Transverse colon (tissue), 4 donors: ENCODE measurements at regions of chr5 and their contacts with region 1.

Region 1: DNA sequence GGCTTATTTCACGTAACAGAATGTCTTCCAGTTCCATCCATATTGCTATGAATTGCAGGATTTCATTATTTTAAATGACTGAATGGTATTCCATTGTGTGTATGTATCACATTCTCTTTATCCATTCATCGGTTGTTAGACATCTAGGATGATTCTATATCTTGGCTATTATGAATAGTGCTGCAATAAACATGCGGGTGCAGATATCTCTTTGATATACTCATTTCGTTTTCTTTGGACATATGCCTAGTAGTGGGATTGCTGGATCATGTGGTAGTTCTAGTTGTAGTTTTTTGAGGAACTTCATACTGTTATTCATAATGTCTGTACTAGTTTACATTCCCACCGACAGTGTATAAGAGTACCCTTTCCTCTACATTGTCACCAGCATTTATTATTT is 460.5 kb downstream of the MAN2A1 start:
- DNase-seq: no peak
- H3K4me3 ChIP-seq: no peak overlapping the region
- H3K27ac ChIP-seq: no peak overlapping the region
- H3K4me1 ChIP-seq: no peaks in the 10 kb centered on the region
- H3K27me3 ChIP-seq: no peaks in the 10 kb centered on the region
- CTCF ChIP-seq: no peak
- EP300 ChIP-seq: no peak
- POLR2A ChIP-seq: no peak

Region 2: DNA sequence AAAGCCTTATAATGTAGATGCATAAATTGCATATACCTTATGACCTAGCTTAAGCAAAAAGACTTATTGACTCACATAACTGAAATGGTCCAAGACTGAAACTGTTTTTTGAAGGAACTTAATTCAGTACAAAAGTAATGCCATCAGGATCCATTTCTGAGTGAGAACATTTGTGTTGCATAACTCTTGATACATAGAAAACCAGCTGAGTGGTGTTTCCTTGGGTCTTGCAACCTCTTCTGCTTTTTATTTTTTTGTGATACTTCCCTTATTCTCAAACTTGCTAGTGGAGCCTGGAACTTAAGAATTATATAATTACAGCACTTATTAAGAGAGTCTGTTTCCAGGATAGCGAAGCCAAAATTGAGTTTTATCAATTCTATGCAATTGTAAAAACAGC is 188.4 kb before region 1 on chr5:
- in situ Hi-C with region 1: no loop called
- intact Hi-C with region 1: no loop called
- DNase-seq: no peak
- H3K4me3 ChIP-seq: no peak overlapping the region
- H3K27ac ChIP-seq: no peak overlapping the region
- H3K4me1 ChIP-seq: no peaks in the 10 kb centered on the region
- H3K27me3 ChIP-seq: no peaks in the 10 kb centered on the region
- CTCF ChIP-seq: no peak
- EP300 ChIP-seq: no peak
- POLR2A ChIP-seq: no peak

Region 3: GRCh38 chr5:110094548-110094947 is 55.7 kb before region 1 on chr5:
- in situ Hi-C with region 1: no loop called
- intact Hi-C with region 1: loop called (anchors 2 kb)
- DNase-seq: no peak
- H3K4me3 ChIP-seq: no peak overlapping the region
- H3K27ac ChIP-seq: no peak overlapping the region
- H3K4me1 ChIP-seq: peaks cover 0 to 4% (median 0%) of the 10 kb centered on the region in 4 donors
- H3K27me3 ChIP-seq: no peaks in the 10 kb centered on the region
- CTCF ChIP-seq: no peak
- EP300 ChIP-seq: no peak
- POLR2A ChIP-seq: no peak

Region 4: DNA sequence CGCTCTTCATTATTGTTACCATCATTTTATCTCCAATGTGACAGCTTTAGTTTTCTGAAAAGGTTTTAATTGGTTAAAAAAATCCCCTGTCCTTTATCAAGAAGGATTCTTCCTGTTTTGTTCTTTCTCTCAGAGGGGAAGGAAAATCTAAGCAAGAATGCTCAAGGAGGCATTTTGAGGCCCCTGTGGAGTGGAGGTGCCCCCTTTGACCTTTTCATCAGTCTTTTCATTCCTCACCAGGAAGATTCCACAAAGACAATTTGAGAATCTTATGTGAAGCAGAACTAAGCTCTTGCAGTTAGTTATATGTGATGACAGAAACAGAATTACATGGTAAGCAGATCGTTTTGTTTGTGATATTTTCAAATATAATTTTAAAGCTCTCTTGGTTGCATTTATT is 29.1 kb after region 1 on chr5:
- in situ Hi-C with region 1: no loop called
- intact Hi-C with region 1: loop called (anchors 1 kb)
- DNase-seq: no peak
- H3K4me3 ChIP-seq: no peak overlapping the region
- H3K27ac ChIP-seq: no peak overlapping the region
- H3K4me1 ChIP-seq: no peaks in the 10 kb centered on the region
- H3K27me3 ChIP-seq: no peaks in the 10 kb centered on the region
- CTCF ChIP-seq: no peak
- EP300 ChIP-seq: no peak
- POLR2A ChIP-seq: no peak